Astrocyte of the cerebellum (primary cell): ENCODE measurements at regions of chr12 and their contacts with region 1.

Region 1: GRCh38 chr12:93137656-93138612 is 208.8 kb upstream of the EEA1 start:
- DNase-seq: no peak
- H3K4me3 ChIP-seq: no peak overlapping the region
- CTCF ChIP-seq: no peak

Region 2: DNA sequence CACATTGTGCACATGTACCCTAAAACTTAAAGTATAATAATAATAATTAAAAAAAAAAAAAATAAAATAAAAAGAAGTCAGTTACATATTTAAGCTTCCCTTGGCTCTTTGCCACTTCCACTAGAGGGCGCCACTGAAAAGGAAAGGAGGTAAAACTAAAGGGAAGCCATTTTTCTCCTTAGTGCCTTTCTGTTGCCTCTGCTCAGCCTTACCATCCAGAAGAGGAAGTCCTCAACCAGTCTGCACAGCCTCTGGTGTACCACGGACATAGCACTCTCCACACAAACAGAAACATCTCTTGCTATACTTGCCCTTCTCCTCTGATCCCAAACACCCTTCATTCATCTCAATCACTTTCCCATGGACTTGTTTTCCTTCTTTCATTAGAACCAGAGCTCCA is 39.9 kb before region 1 on chr12:
- in situ Hi-C with region 1: loop called (anchors 5 kb)
- DNase-seq: no peak
- H3K4me3 ChIP-seq: no peak overlapping the region
- CTCF ChIP-seq: peak; percentile 20

Region 3: GRCh38 chr12:93205361-93205760 is 67.4 kb after region 1 on chr12:
- in situ Hi-C with region 1: no loop called
- DNase-seq: no peak
- H3K4me3 ChIP-seq: no peak overlapping the region
- CTCF ChIP-seq: no peak

Region 4: DNA sequence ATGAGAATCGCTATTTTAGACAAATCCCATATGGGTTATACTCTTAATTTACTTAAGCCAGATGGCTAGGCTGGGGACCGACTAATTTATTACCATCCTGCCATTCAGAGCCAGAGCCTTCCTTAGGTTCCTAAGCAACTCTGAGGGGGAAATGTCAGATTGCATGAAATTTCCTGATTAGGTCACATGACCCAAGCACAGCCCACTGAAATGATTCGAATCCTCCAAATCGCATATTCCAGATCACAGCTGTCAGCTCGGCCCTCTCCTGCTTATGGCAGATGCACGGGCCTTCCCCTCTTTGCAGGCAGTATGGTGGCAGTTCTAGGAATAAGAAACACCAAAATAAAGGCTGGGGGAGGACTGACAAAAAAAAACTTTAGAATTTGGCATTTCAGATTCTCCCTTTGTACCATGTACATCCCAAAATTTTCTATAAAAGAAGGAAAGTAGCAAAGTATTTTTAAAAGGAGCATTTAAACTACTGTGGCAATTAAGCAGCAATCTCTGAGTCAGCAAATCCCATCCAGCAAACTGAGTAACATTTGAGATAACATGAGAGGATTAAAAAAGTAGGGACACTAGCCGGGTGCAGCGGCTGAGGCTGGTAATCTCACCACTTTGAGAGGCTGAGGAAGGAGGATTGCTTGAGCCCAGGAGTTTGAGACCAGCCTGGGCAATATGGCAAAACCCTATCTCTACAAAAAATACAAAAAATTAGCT is 209.3 kb after region 1 on chr12:
- in situ Hi-C with region 1: no loop called
- DNase-seq: no peak
- H3K4me3 ChIP-seq: no peak overlapping the region
- CTCF ChIP-seq: no peak